ENCODE measurements at regions of chr1 and their contacts with region 1.

Region 1: DNA sequence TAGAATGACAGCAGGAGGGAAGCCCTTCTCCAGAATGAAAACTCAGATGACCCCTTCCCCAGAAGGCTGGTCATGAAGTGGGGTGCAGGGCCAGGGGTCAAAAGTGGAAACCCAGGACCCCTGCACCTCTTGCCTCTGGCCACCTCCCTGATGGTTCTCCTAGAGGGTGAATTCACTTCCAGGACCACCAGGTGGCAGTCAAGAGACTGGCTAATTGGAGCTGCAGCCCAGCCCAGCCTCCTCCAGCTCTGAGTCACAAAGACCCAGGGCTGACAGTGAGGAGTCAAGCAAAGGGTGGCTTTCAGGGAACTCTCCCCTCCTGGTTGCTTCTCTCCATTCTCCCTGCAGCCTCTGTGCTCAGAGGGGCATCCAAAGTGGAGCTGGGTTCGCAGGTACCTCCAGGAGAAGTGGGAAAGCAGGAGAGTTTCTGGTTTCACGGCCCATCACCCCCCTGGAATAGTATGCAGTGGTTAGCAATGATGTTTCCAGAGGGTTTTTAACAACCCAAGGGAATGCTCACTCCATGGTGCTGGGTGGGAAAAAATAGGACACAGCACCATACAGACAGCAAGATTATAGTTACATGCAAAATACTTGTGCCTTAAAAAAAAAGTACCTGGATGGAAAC is 6.1 kb upstream of the EPHB2 start:
- DNase-seq: peak; percentile 60
- ATAC-seq: peak; percentile 99
- H3K4me3 ChIP-seq: no peak overlapping the region
- H3K27ac ChIP-seq: no peak overlapping the region
- H3K4me1 ChIP-seq: peaks cover 0 to 14% of the 10 kb centered on the region in 2 experiments; a peak in 3 of 4 replicates
- H3K27me3 ChIP-seq: no peaks in the 10 kb centered on the region
- CTCF ChIP-seq: peak; percentile 84 to 94 (median 89)
- POLR2A ChIP-seq: no peak
- RAD21 ChIP-seq: peak; percentile 93

Region 2: GRCh38 chr1:22689505-22689904 is 15.0 kb before region 1 on chr1:
- CTCF ChIA-PET with region 1: interaction called, 13 read pairs
- POLR2A ChIA-PET with region 1: no interaction called
- RAD21 ChIA-PET with region 1: no interaction called
- intact Hi-C with region 1: no loop called
- DNase-seq: peak; percentile 74
- ATAC-seq: peak; percentile 87
- H3K4me3 ChIP-seq: peak overlapping the region; percentile 18 to 38
- H3K27ac ChIP-seq: peak overlapping the region; percentile 2; the same call in 1 of the 2 replicates
- H3K4me1 ChIP-seq: peaks cover 7 to 15% of the 10 kb centered on the region in 2 experiments; a peak in 3 of 4 replicates
- H3K27me3 ChIP-seq: no peaks in the 10 kb centered on the region
- CTCF ChIP-seq: no peak
- POLR2A ChIP-seq: no peak
- RAD21 ChIP-seq: peak; percentile 29; the same call in 1 of the 2 replicates

Region 3: GRCh38 chr1:22861764-22862440 is 157.3 kb after region 1 on chr1:
- CTCF ChIA-PET with region 1: interaction called, 83 read pairs
- POLR2A ChIA-PET with region 1: interaction called, 8 read pairs
- RAD21 ChIA-PET with region 1: interaction called, 17 to 20 read pairs
- intact Hi-C with region 1: loop called (anchors 1 kb)
- DNase-seq: peak; percentile 33
- ATAC-seq: peak; percentile 91
- H3K4me3 ChIP-seq: no peak overlapping the region
- H3K27ac ChIP-seq: no peak overlapping the region
- H3K4me1 ChIP-seq: peaks cover 6 to 7% of the 10 kb centered on the region in 2 experiments; a peak in 3 of 4 replicates
- H3K27me3 ChIP-seq: no peaks in the 10 kb centered on the region
- CTCF ChIP-seq: peak; percentile 87 to 95 (median 91)
- POLR2A ChIP-seq: no peak
- RAD21 ChIP-seq: peak; percentile 95

Region 4: GRCh38 chr1:22889213-22889827 is 184.8 kb after region 1 on chr1:
- CTCF ChIA-PET with region 1: interaction called, 18 read pairs
- POLR2A ChIA-PET with region 1: no interaction called
- RAD21 ChIA-PET with region 1: interaction called in 1 of 2 experiments, 3 read pairs
- intact Hi-C with region 1: loop called (anchors 1 kb)
- DNase-seq: peak; percentile 28
- ATAC-seq: peak; percentile 79
- H3K4me3 ChIP-seq: no peak overlapping the region
- H3K27ac ChIP-seq: no peak overlapping the region
- H3K4me1 ChIP-seq: no peaks in the 10 kb centered on the region
- H3K27me3 ChIP-seq: no peaks in the 10 kb centered on the region
- CTCF ChIP-seq: peak; percentile 87 to 90 (median 89)
- POLR2A ChIP-seq: no peak
- RAD21 ChIP-seq: peak; percentile 88

Region 5: GRCh38 chr1:22930235-22930912 is 225.8 kb after region 1 on chr1:
- CTCF ChIA-PET with region 1: interaction called, 24 read pairs
- POLR2A ChIA-PET with region 1: no interaction called
- RAD21 ChIA-PET with region 1: interaction called, 6 read pairs
- intact Hi-C with region 1: loop called (anchors 1 kb)
- DNase-seq: peak; percentile 41
- ATAC-seq: peak; percentile 96
- H3K4me3 ChIP-seq: no peak overlapping the region
- H3K27ac ChIP-seq: no peak overlapping the region
- H3K4me1 ChIP-seq: 0 out of 4 replicates have a peak, but pooled peaks cover 0 to 2% of the 10 kb centered on the region in 2 experiments
- H3K27me3 ChIP-seq: no peaks in the 10 kb centered on the region
- CTCF ChIP-seq: peak; percentile 92 to 93 (median 93)
- POLR2A ChIP-seq: no peak
- RAD21 ChIP-seq: peak; percentile 97

Region 6: GRCh38 chr1:23013657-23014056 is 309.1 kb after region 1 on chr1:
- CTCF ChIA-PET with region 1: no interaction called
- POLR2A ChIA-PET with region 1: no interaction called
- RAD21 ChIA-PET with region 1: no interaction called
- intact Hi-C with region 1: no loop called
- DNase-seq: no peak
- ATAC-seq: no peak
- H3K4me3 ChIP-seq: no peak overlapping the region
- H3K27ac ChIP-seq: no peak overlapping the region
- H3K4me1 ChIP-seq: peaks cover 11 to 33% of the 10 kb centered on the region in 2 experiments; a peak in 3 of 4 replicates
- H3K27me3 ChIP-seq: no peaks in the 10 kb centered on the region
- CTCF ChIP-seq: no peak
- POLR2A ChIP-seq: no peak
- RAD21 ChIP-seq: no peak